Lower leg skin (tissue), 4 donors: ENCODE measurements at regions of chr2 and their contacts with region 1.

Region 1: DNA sequence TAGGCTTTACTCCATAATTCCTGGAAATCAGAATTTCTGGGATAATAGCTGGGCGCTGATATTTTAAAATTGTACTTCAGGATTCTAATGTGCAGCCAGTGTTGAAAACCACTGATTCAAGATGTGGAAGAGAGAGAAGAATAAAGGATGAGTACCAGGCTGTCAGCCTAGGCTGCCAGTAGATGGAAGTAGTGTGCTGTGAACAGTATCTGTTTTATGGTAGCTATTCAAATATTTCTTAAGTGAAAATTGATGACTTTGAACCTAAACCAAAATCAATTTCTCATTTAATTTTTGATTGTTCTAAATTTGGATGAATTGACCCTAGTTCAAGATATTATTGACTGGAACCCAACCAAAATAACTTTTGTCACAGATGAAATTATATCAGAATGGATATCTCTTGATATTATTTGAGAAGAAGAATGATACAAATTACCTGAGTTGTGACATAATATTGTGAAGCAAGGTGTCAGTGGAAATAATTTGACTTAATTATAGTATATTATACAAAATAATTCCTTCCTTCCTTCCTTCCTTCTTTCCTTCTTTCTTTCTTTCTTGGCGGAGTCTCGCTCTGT is 88.1 kb downstream of the COMMD1 start:
- DNase-seq: no peak
- H3K4me3 ChIP-seq: no peak overlapping the region
- CTCF ChIP-seq: no peak
- POLR2A ChIP-seq: no peak

Region 2: GRCh38 chr2:61834893-61835292 is 158.6 kb before region 1 on chr2:
- intact Hi-C with region 1: no loop called
- DNase-seq: no peak
- H3K4me3 ChIP-seq: no peak overlapping the region
- CTCF ChIP-seq: no peak
- POLR2A ChIP-seq: no peak

Region 3: DNA sequence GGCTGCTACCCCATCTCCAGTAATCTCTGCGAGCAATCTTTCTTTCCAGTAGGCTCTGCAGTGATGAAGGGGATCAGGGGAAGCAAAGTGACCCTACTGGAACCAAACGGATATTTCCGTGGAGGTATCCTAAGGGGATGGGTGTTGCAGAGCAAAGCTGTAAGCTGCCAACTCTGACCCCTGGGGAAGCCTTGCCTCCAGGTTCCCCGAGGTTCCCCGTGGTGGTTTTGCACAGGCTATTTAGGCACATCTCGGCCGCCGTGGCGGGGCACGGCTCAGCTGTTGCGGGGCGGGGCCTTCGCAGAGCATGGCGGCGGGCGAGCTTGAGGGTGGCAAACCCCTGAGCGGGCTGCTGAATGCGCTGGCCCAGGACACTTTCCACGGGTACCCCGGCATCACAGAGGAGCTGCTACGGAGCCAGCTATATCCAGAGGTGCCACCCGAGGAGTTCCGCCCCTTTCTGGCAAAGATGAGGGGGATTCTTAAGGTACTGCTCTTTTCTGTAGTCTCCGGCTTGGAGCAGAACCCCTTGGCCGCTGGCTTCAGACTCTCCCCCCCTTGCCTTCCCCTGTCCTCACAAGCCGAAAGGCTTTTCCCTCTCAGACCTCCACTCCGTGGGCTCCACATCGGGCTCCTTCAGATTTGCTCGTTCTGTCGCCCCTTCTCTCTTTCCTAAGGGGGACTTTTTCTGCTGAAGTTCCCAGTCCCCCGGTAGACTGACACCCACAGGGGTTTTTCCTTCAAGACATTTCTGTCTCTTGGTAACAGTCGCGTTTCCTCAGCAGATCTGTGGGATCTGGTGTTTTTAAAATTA is 88.0 kb before region 1 on chr2 and contains the start of gene COMMD1:
- intact Hi-C with region 1: no loop called
- DNase-seq: peak; percentile 73 to 95
- H3K4me3 ChIP-seq: peak within 1 kb of the TSS; percentile 65
- CTCF ChIP-seq: no peak
- POLR2A ChIP-seq: no peak
- total RNA-seq, gene COMMD1: 39.2 to 46.9 (median 43.1) TPM

Region 4: GRCh38 chr2:62406573-62407043 is 413.1 kb after region 1 on chr2:
- intact Hi-C with region 1: loop called (anchors 10 kb)
- DNase-seq: no peak
- H3K4me3 ChIP-seq: no peak overlapping the region
- CTCF ChIP-seq: no peak
- POLR2A ChIP-seq: no peak